Endothelial cell of umbilical vein (primary cell): ENCODE measurements at regions of chr9 and their contacts with region 1.

Region 1: DNA sequence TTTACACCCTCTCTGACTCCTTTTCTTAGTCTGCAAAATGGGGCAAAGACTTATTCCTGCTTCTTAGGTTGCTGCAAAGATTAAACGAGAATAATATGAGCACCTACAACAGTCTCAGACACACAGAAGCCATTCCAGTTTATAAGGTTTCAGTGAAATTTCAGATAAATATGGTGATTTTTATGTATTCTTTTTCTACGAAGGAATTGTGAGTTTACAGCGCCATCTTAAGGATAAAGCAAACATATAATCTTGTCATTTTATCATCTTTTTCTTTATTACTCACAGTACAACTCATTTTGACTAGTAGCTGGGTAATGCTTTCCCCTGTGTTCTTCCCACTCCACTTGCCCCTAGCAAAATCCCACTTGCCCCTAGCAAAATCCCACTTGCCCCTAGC is 29.2 kb upstream of the SMC5 start:
- DNase-seq: peak; percentile 19
- H3K4me3 ChIP-seq: no peak overlapping the region
- H3K27ac ChIP-seq: no peak overlapping the region
- H3K4me1 ChIP-seq: no peaks in the 10 kb centered on the region
- H3K27me3 ChIP-seq: no peaks in the 10 kb centered on the region
- CTCF ChIP-seq: peak in 1 of 2 donors; percentile 18
- POLR2A ChIP-seq: no peak

Region 2: DNA sequence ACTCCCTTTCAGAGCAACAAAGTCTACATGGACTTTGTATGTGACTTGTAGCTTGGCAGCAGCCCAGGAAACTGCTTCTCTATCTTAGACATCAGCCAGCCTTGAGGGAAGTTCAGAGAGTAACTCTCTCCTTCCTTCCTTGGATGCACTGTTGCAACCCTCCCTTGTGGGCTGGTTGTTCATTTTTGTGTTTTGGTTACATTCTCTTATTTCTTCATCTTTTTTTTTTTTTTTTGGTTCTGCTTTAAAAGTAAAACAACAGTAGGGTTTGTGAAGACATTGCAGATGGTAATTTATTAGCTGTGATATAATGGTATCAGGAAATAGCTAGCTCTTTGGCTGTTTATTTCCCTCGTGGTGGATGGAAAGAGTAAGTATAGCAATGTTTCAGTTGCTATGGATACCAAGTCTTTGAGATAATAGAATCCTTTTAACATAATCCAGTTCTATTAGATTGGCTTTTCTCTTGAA is 283.9 kb before region 1 on chr9:
- CTCF ChIA-PET with region 1: no interaction called
- POLR2A ChIA-PET with region 1: no interaction called
- dilution Hi-C with region 1: no loop called
- intact Hi-C with region 1: loop called (anchors 10 kb)
- DNase-seq: peak; percentile 62
- H3K4me3 ChIP-seq: no peak overlapping the region
- H3K27ac ChIP-seq: peak overlapping the region; percentile 90
- H3K4me1 ChIP-seq: peaks cover 22% of the 10 kb centered on the region
- H3K27me3 ChIP-seq: no peaks in the 10 kb centered on the region
- CTCF ChIP-seq: no peak
- POLR2A ChIP-seq: no peak

Region 3: GRCh38 chr9:70136632-70137031 is 92.9 kb before region 1 on chr9:
- CTCF ChIA-PET with region 1: no interaction called
- POLR2A ChIA-PET with region 1: no interaction called
- dilution Hi-C with region 1: no loop called
- intact Hi-C with region 1: loop called (anchors 10 kb)
- DNase-seq: peak; percentile 64
- H3K4me3 ChIP-seq: no peak overlapping the region
- H3K27ac ChIP-seq: no peak overlapping the region
- H3K4me1 ChIP-seq: peaks cover 22% of the 10 kb centered on the region
- H3K27me3 ChIP-seq: no peaks in the 10 kb centered on the region
- CTCF ChIP-seq: no peak
- POLR2A ChIP-seq: no peak

Region 4: DNA sequence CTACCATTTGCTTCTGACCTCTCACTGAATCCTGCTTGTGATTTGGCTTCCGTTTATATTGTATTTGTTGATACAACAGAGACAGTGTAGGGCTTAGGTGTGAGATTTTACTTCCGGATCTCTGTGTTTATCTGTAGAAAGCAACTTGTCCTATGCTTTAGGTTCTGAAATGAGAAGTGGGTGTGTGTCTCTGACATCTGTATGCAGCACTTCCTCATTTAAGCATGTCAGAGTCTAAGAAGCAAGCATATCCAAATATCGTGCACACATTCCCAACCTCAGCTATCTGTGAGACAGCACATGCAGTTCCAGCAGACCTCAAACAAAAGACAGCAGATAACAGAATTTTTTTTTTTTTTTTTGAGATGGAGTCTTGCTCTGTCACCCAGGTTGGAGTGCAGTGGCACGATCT is 168.6 kb after region 1 on chr9:
- CTCF ChIA-PET with region 1: no interaction called
- POLR2A ChIA-PET with region 1: no interaction called
- dilution Hi-C with region 1: no loop called
- intact Hi-C with region 1: no loop called
- DNase-seq: no peak
- H3K4me3 ChIP-seq: no peak overlapping the region
- H3K27ac ChIP-seq: no peak overlapping the region
- H3K4me1 ChIP-seq: no peaks in the 10 kb centered on the region
- H3K27me3 ChIP-seq: no peaks in the 10 kb centered on the region
- CTCF ChIP-seq: no peak
- POLR2A ChIP-seq: no peak

Region 5: DNA sequence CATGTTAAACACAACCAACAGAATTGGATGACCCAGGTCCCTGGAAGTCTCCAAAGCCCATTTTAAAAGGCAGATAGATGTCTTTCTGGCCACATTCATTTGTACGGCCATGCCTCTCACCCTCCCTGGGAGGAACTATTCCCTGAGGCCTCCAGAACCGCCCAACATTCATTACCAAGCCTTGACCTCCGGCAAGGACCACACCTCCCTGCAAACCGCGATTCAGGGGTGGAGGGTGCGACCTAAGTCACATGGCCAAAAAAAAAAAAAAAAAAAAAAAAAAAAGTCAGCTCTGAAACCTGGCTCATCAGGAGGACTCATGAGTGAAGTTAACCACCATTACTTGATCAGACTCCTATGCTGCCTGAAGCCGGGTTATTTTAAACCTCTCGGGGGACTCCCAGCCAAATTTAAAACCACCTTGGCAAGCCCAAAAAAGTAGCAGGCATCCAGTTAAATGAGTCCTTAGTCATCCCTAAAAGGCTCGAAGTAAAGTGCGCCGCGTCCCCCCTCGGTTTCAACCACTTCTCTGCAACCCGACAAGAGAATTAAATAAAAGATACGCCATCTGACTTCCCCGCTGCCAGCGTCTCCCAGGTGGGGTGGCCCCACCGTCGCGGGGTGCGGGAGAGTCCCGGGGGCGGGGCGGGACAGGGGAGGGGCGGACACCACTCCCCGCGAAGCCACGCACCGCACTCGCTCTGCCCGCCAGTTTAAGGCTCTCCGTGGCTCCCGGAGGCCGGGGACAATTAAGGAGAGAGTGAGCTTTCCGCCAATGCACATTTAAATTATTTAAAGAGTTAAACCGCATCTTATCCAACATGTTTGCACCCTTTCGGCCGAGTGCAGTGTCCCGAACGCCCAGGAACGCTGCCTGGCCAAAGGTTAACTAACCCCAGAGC is 182.6 kb after region 1 on chr9:
- CTCF ChIA-PET with region 1: no interaction called
- POLR2A ChIA-PET with region 1: no interaction called
- dilution Hi-C with region 1: no loop called
- intact Hi-C with region 1: no loop called
- DNase-seq: peak; percentile 69
- H3K4me3 ChIP-seq: peak overlapping the region; percentile 73 to 94 (median 91)
- H3K27ac ChIP-seq: peak overlapping the region; percentile 84
- H3K4me1 ChIP-seq: peaks cover 31% of the 10 kb centered on the region
- H3K27me3 ChIP-seq: no peaks in the 10 kb centered on the region
- CTCF ChIP-seq: no peak
- POLR2A ChIP-seq: peak; percentile 11